Activated CD4-positive, alpha-beta T cell treated with anti-CD3 and anti-CD28 coated beads for 36 hours (primary cell): ENCODE measurements at regions of chr15 and their contacts with region 1.

Region 1: GRCh38 chr15:45279024-45279698 is 27.1 kb downstream of the SLC28A2 start:
- DNase-seq: peak; percentile 97
- ATAC-seq: peak; percentile 100
- H3K4me3 Mint-ChIP-seq: peak overlapping the region; percentile 83
- H3K27ac Mint-ChIP-seq: peak overlapping the region; percentile 83
- H3K4me1 Mint-ChIP-seq: peaks cover 18% of the 10 kb centered on the region
- H3K27me3 Mint-ChIP-seq: peaks cover 1% of the 10 kb centered on the region

Region 2: DNA sequence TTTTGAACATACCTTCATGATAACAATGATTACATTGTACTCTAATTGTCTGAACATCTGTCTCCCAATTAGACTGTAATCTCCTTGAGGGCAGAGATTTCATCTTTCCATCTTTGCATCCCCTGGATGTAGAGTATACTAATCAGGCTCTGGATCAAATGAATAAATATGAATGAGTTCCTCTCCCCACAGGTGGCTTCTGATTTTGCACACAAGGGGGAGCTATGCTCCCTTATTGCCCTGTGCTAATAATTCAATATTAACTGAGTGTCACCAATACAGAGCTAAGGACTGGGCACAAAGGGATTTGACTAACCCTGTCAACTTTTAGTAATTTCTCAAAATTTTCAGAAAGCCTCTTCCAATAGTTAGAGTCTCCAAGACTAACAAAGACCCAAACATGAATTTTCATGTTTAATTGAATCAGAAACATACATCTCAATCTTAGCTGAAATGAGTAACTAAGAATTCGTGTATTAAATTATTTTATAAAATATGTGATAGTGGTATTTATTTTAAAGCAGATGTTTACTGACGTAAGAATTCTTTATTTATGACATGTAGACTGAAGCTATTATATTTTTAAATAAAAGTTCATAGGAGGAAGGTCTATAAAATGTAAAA is 152.5 kb before region 1 on chr15:
- CTCF ChIA-PET with region 1: no interaction called
- POLR2A ChIA-PET with region 1: no interaction called
- intact Hi-C with region 1: loop called in 1 of 2 experiments (anchors 2 kb)
- DNase-seq: peak; percentile 51
- ATAC-seq: peak; percentile 50
- H3K4me3 Mint-ChIP-seq: no peak overlapping the region
- H3K27ac Mint-ChIP-seq: no peak overlapping the region
- H3K4me1 Mint-ChIP-seq: no peaks in the 10 kb centered on the region
- H3K27me3 Mint-ChIP-seq: peaks cover 43% of the 10 kb centered on the region

Region 3: GRCh38 chr15:45187894-45188830 is 91.0 kb before region 1 on chr15 and contains the start of gene SHF:
- CTCF ChIA-PET with region 1: no interaction called
- POLR2A ChIA-PET with region 1: no interaction called
- intact Hi-C with region 1: loop called in 1 of 2 experiments (anchors 1 kb)
- DNase-seq: peak; percentile 90
- ATAC-seq: peak; percentile 82
- H3K4me3 Mint-ChIP-seq: peak within 1 kb of the TSS; percentile 85
- H3K27ac Mint-ChIP-seq: peak within 1 kb of the TSS; percentile 98
- H3K4me1 Mint-ChIP-seq: peaks cover 28% of the 10 kb centered on the region
- H3K27me3 Mint-ChIP-seq: no peaks in the 10 kb centered on the region
- total RNA-seq, gene SHF: 17.9 to 18.7 TPM

Region 4: DNA sequence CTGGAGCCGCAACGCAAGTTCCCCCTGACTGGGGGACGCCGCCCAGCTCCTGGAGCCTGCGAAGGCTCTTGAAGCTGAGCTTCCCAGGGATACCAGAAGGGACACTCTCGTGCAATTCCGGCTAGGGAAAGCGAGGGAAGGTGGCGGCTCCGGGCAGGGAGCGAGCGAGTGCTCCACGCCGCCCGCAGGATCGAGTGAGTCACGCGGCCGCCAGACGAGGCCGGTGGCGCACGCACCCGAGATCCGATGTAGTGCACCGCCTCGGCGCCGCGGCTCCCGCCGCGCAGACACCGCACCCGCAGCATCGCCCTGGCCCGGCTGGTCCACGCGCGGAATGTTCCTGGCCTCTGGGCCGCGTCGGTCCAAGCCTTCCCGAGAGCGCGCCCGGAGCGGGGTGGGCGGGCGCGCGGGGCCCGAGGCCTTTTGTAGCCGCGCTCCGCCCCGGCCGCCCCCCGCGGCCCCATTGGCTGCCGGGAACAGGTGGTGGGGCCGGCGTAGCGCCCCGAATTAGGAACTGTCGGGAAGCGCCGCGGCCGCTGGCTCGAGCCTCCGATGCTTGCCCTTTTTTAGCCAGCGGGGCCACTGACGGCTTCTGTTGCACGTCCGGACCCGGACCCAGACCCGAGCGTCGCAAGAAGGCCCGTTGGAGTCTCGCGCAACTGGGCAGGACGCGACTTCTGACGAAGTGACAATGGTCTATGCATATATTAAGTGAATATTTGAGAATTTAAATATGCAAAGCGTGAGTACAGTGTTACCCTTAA is 99.2 kb after region 1 on chr15 and contains the start of gene GATM:
- CTCF ChIA-PET with region 1: no interaction called
- POLR2A ChIA-PET with region 1: no interaction called
- intact Hi-C with region 1: loop called in 1 of 2 experiments (anchors 1 kb)
- DNase-seq: peak; percentile 75
- ATAC-seq: peak; percentile 88
- H3K4me3 Mint-ChIP-seq: peak within 1 kb of the TSS; percentile 66
- H3K27ac Mint-ChIP-seq: peak within 1 kb of the TSS; percentile 26
- H3K4me1 Mint-ChIP-seq: peaks cover 12% of the 10 kb centered on the region
- H3K27me3 Mint-ChIP-seq: peaks cover 29% of the 10 kb centered on the region
- total RNA-seq, gene GATM: 2.5 to 3.4 TPM

Region 5: DNA sequence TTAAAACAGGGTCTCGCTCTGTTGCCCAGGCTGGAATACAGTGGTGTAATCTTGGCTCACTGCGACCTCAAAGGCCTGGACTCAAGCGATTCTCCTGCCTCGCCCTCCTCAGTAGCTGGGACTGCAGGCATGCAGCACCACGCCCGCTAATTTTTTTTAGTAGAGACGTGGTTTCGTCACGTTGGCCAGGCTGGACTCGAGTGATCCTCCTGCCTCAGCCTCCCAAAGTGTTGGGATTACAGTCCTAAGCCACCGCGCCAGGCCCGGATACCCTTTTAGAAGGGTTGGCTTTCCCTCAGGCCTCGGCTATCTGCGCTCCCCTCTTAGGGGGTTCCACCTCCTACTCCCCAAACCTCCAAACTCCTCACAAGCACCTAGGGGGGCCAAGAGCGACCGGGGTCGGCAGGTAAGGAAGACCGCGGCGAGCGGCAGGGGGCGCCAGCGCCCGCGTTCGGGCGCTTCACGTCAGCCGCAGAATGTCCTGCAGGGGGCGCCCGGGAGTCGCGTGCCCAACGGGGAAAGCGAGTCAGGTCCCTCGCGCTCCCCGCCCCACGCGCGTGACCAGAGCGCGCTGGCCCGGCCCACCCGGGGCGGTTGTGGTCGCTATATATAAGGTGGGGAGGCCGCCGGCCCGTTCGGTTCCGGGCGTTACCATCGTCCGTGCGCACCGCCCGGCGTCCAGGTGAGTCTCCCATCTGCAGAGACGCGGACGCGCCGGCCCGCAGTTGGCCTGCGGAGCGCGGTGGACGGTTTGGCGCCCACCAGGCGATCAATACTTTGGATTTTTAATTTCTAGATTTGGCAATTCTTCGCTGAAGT is 151.0 kb after region 1 on chr15:
- CTCF ChIA-PET with region 1: no interaction called
- POLR2A ChIA-PET with region 1: no interaction called
- intact Hi-C with region 1: no loop called
- DNase-seq: peak; percentile 92
- ATAC-seq: peak; percentile 97
- H3K4me3 Mint-ChIP-seq: peak overlapping the region; percentile 56
- H3K27ac Mint-ChIP-seq: no peak overlapping the region
- H3K4me1 Mint-ChIP-seq: peaks cover 2% of the 10 kb centered on the region
- H3K27me3 Mint-ChIP-seq: peaks cover 7% of the 10 kb centered on the region

Region 6: DNA sequence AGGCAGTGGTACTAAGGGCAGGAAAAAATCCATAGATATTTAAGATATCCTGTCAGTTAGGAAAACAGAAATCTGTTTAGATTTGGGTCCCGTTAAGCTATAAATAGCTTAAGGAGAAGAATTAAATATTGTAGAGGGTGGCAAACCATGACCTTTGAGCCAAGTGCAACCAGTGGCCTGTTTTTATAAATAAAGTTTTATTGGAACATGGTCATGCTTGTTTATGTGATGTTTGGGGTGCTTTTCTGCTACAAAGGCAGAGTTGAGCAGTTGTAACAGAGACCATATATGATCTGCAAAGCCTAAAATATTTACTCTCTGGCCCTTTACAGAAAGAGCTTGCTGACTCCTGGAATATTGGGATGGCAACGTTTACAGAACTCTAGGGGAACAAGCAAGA is 421.9 kb after region 1 on chr15:
- CTCF ChIA-PET with region 1: no interaction called
- POLR2A ChIA-PET with region 1: no interaction called
- intact Hi-C with region 1: no loop called
- DNase-seq: no peak
- ATAC-seq: no peak
- H3K4me3 Mint-ChIP-seq: no peak overlapping the region
- H3K27ac Mint-ChIP-seq: no peak overlapping the region
- H3K4me1 Mint-ChIP-seq: peaks cover 14% of the 10 kb centered on the region
- H3K27me3 Mint-ChIP-seq: peaks cover 3% of the 10 kb centered on the region